GM12878 (cell line): ENCODE measurements at regions of chr1 and their contacts with region 1.

Region 1: DNA sequence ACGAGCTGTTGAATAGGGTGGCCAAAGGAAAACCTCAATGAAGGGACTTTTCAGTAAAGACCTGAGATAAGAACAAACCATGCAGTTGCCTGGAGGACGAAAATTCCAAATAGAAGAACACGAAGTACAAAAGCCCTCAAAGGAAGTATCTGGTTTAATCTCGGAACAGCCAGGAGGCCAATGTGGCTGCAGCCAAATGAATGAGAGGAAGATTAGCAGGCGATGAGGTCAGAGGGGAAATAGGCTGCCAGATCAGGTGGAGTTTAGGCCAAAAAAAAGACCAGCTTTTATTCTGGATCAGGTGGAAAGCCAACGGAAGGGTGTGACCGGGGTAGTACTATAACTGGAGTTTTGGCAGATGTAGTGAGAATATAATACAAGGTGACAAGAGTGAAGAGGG is 43.7 kb downstream of the SRSF11 start:
- DNase-seq: no peak
- ATAC-seq: no peak
- H3K4me3 ChIP-seq: no peak overlapping the region
- H3K27ac ChIP-seq: no peak overlapping the region
- H3K4me1 ChIP-seq: no peaks in the 10 kb centered on the region
- H3K27me3 ChIP-seq: no peaks in the 10 kb centered on the region
- CTCF ChIP-seq: no peak
- EP300 ChIP-seq: no peak
- POLR2A ChIP-seq: no peak
- RAD21 ChIP-seq: no peak

Region 2: DNA sequence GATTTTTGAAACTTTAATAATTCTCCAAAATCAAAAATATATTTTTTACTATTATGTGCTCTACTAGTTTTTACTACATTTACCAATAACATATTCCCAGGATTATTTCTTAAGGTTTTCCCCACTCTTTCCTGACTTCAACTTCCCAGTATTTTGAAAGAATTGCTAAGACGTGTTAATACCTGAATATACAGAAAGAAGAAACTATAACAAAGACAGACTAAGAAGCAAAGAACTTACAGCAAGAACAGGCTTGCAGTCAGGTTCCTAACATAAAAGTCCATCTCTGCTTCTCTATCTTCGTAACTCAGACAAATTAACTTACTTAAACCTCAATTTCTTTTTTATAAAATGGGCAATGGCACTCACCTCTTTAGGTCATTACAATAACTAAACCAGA is 19.5 kb after region 1 on chr1:
- CTCF ChIA-PET with region 1: no interaction called
- POLR2A ChIA-PET with region 1: no interaction called
- RAD21 ChIA-PET with region 1: no interaction called
- SMC1A ChIA-PET with region 1: no interaction called
- in situ Hi-C with region 1: no loop called
- intact Hi-C with region 1: no loop called
- DNase-seq: no peak
- ATAC-seq: no peak
- H3K4me3 ChIP-seq: no peak overlapping the region
- H3K27ac ChIP-seq: no peak overlapping the region
- H3K4me1 ChIP-seq: no peaks in the 10 kb centered on the region
- H3K27me3 ChIP-seq: no peaks in the 10 kb centered on the region
- CTCF ChIP-seq: no peak
- EP300 ChIP-seq: no peak
- POLR2A ChIP-seq: no peak
- RAD21 ChIP-seq: no peak

Region 3: GRCh38 chr1:70382682-70383081 is 117.8 kb after region 1 on chr1:
- CTCF ChIA-PET with region 1: no interaction called
- POLR2A ChIA-PET with region 1: no interaction called
- RAD21 ChIA-PET with region 1: no interaction called
- SMC1A ChIA-PET with region 1: no interaction called
- in situ Hi-C with region 1: no loop called
- intact Hi-C with region 1: no loop called
- DNase-seq: no peak
- ATAC-seq: peak; percentile 87
- H3K4me3 ChIP-seq: no peak overlapping the region
- H3K27ac ChIP-seq: no peak overlapping the region
- H3K4me1 ChIP-seq: no peaks in the 10 kb centered on the region
- H3K27me3 ChIP-seq: no peaks in the 10 kb centered on the region
- CTCF ChIP-seq: no peak
- EP300 ChIP-seq: peak in 1 of 2 experiments; percentile 47; a peak in 1 of 4 replicates
- POLR2A ChIP-seq: no peak
- RAD21 ChIP-seq: no peak

Region 4: GRCh38 chr1:70509996-70510876 is 245.4 kb after region 1 on chr1:
- CTCF ChIA-PET with region 1: no interaction called
- POLR2A ChIA-PET with region 1: no interaction called
- RAD21 ChIA-PET with region 1: no interaction called
- SMC1A ChIA-PET with region 1: no interaction called
- in situ Hi-C with region 1: no loop called
- intact Hi-C with region 1: loop called (anchors 5 kb)
- DNase-seq: peak; percentile 30
- ATAC-seq: peak; percentile 94
- H3K4me3 ChIP-seq: no peak overlapping the region
- H3K27ac ChIP-seq: no peak overlapping the region
- H3K4me1 ChIP-seq: no peaks in the 10 kb centered on the region
- H3K27me3 ChIP-seq: no peaks in the 10 kb centered on the region
- CTCF ChIP-seq: peak; percentile 55 to 73 (median 58)
- EP300 ChIP-seq: no peak
- POLR2A ChIP-seq: no peak
- RAD21 ChIP-seq: peak; percentile 93